OCI-LY7 (cell line): ENCODE measurements at regions of chr19 and their contacts with region 1.

Region 1: DNA sequence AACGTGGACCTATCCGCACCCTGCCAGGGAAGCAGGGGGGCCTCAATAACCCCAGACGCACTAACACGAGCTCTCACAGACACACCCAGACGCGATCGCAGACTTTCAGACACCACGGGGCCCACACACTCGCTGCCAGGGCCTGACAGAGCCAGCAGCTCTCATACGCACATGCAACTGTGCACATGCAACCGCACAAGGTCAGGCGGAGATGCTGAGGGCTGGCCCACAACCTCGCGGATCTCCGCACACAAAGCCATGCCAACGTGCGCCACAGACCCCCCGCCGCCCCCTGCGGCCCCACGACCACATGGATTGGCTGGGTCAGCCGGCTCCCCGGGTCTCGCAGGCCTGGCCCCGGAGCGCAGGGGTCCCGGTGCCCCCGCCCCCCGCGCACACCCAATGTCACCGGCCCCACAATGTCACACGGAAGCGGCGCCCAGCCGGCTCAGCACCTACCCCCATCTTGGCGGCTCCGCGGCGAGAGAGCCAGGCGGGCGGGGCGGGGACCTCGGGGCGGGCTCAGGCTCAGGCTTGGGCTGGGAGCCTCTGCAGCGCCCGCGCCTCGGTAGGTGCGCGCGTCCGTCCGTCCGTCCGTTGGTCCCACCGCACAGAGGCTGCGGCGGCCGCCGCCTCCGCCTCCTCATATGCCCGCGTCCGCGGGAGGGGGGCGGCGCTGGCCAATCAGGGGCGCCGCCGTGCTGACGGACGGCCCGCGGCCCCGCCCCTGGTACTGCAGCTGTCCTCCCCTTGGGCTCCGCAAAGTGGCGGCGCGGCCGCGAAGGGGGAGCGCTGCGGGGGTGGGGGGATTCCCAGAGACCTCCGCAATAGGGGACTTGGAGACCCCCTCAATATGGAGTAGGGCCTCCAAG is at the start of gene ATP1A3:
- DNase-seq: peak; percentile 87
- H3K4me3 ChIP-seq: peak within 1 kb of the TSS; percentile 95
- H3K27ac ChIP-seq: peak within 1 kb of the TSS; percentile 15
- H3K4me1 ChIP-seq: peaks cover 38% of the 10 kb centered on the region
- CTCF ChIP-seq: no peak
- total RNA-seq, gene ATP1A3: 3.1 and 9.3 TPM in 2 replicates

Region 2: GRCh38 chr19:41801792-41802211 is 192.0 kb before region 1 on chr19:
- CTCF ChIA-PET with region 1: no interaction called
- POLR2A ChIA-PET with region 1: no interaction called
- intact Hi-C with region 1: no loop called
- DNase-seq: no peak
- H3K4me3 ChIP-seq: no peak overlapping the region
- H3K27ac ChIP-seq: peak overlapping the region; percentile 86
- H3K4me1 ChIP-seq: peaks cover 60% of the 10 kb centered on the region
- CTCF ChIP-seq: no peak

Region 3: DNA sequence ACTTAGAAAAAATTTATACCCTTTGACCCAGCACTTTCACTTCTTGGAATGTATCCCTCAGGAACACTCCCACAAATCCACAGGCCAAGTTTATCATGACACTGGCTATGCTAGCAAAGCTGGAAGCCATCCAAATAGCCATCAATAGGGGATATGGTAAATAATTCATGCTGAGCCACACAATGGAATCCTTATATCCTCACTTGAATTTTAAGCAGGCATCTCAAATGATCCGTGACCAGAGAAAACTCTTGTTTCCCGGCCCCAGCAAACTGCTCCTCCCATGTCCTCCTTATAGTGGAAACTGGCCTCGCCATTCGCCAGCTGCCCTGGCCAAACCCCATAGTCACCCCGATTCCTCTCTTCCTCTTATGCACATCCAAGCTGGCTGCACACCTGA is 38.6 kb after region 1 on chr19:
- CTCF ChIA-PET with region 1: no interaction called
- POLR2A ChIA-PET with region 1: no interaction called
- intact Hi-C with region 1: loop called (anchors 2 kb)
- DNase-seq: no peak
- H3K4me3 ChIP-seq: no peak overlapping the region
- H3K27ac ChIP-seq: no peak overlapping the region
- H3K4me1 ChIP-seq: peaks cover 4% of the 10 kb centered on the region
- CTCF ChIP-seq: no peak